Activated CD8-positive, alpha-beta T cell treated with anti-CD3 and anti-CD28 coated beads, Interleukin-2, amount 10 ng/mL, durations not matched to agents 7 days and 5 days (primary cell): ENCODE measurements at regions of chr1 and their contacts with region 1.

Region 1: GRCh38 chr1:48061162-48062136 is 64.3 kb upstream of the TRABD2B start:
- DNase-seq: peak; percentile 46
- ATAC-seq: no peak
- H3K4me3 Mint-ChIP-seq: no peak overlapping the region
- H3K27ac Mint-ChIP-seq: no peak overlapping the region
- H3K4me1 Mint-ChIP-seq: no peaks in the 10 kb centered on the region
- H3K27me3 Mint-ChIP-seq: no peaks in the 10 kb centered on the region

Region 2: DNA sequence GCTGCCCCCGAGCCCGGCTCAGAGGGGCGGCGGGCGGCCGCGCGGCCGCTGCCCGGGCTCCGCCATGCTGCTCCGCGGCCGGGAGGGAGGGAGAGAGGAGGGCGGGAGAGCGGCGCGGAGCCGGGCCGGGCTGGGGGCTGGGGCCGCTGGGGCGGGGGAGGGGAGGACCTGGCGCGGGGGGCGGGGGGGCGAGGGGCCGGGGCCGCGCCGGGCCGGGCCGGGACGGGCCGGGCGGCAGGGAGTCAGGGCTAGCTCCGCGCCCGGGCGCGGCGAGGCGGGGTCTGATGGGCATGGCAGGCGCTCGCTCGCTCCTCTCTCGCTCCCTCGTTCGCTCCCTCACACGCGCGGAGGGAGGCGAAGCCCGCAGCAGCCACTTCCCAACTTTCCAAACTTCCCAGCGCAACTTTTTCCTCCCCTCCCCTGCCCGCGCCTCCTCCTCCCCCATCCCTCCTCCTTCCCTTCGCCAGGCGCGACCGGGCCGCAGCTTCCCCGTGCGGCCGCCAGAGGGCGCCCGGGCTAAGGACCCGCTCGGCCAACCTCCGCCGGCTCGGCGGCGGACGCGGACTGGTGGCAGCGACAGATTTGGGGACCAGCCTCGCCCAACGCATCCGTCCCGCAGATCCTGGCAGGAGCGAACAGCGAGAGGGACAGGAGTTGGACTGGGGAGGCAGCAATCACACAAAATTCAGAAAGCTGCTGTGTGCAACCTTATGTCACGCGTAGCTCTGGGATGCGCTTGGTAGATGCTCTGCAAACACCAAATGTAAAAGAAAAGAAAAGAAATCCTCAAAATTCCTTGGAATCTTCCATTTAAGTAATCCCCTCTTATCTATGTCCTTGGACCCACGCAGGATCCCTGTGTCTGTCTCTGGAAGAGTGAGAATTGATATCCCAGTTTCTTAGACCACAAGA is 63.9 kb before region 1 on chr1 and contains the start of gene TRABD2B:
- CTCF ChIA-PET with region 1: interaction called, 22 read pairs
- POLR2A ChIA-PET with region 1: no interaction called
- DNase-seq: peak; percentile 64
- ATAC-seq: peak; percentile 91
- H3K4me3 Mint-ChIP-seq: peak within 1 kb of the TSS; percentile 48
- H3K27ac Mint-ChIP-seq: no peak within 1 kb of the TSS
- H3K4me1 Mint-ChIP-seq: peaks cover 5% of the 10 kb centered on the region
- H3K27me3 Mint-ChIP-seq: peaks cover 35% of the 10 kb centered on the region
- total RNA-seq, gene TRABD2B: not detected

Region 3: DNA sequence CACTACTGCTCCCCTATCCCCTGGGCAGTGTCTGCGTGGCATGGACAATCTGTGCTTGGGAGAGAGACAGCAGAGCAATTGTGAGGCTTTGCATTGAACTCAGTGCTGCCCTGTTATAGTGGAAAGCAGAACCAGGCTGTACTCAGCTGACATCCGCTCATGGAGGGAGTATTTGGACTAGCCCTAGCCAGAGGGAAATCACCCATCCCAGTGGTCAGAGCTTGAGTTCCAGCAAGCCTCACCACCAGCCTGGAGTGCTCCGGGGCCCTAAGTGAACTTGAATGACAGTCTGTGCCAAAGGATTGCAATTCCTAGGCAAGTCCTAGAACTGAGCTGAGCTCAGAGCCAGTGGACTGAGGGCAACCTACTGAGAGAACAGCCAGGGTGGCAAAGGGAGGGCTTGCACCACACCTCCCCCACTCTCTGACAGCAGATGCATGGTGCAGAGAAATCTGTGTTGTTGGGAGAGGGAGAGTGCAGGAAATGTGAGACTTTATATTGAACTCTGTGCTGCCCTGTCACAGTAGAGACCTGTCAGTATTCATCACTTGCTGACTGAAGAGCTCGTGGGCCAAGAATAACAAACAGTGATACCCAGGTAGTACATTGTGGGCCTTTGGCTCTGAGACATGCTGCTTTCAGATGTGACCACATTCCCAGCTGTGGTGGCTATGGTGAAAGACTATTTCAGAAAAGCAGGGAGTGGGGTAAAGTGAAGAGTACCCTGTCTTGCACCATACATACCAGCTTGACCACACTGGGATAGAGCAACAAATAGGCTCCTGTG is 53.3 kb after region 1 on chr1:
- CTCF ChIA-PET with region 1: no interaction called
- POLR2A ChIA-PET with region 1: no interaction called
- DNase-seq: no peak
- ATAC-seq: no peak
- H3K4me3 Mint-ChIP-seq: no peak overlapping the region
- H3K27ac Mint-ChIP-seq: no peak overlapping the region
- H3K4me1 Mint-ChIP-seq: no peaks in the 10 kb centered on the region
- H3K27me3 Mint-ChIP-seq: peaks cover 6% of the 10 kb centered on the region

Region 4: DNA sequence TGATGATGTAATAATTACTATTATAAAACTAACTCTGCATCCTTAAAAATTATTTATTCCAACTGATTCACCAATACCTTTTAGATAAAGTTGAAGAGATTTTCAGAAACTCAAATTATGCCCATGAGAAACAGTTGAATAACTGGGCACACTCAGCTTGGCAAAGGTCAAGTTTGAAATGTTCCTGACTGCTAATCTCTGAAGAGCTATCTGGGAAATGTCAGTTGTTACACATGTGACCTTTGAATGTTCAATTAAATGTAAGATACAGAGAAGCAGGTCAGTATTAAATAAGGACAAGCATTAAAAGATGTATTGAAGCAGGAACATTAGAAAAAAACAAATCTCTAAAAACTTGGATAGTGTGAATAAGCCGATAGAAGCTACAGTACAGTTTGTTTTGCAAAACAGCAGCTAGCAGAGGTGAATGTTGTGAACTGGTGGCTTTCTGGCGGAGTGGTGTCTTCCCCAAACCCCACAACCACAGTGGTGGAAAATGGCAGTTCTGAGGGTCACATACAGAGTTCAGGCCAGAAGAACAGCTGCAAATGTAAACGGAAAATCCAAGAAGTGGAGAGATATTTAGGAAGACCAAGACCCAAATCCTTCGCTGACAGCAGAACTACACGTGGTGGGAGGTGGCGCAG is 99.2 kb after region 1 on chr1:
- CTCF ChIA-PET with region 1: no interaction called
- POLR2A ChIA-PET with region 1: no interaction called
- DNase-seq: no peak
- ATAC-seq: no peak
- H3K4me3 Mint-ChIP-seq: no peak overlapping the region
- H3K27ac Mint-ChIP-seq: no peak overlapping the region
- H3K4me1 Mint-ChIP-seq: no peaks in the 10 kb centered on the region
- H3K27me3 Mint-ChIP-seq: peaks cover 7% of the 10 kb centered on the region

Region 5: GRCh38 chr1:48182441-48182840 is 121.0 kb after region 1 on chr1:
- CTCF ChIA-PET with region 1: no interaction called
- POLR2A ChIA-PET with region 1: no interaction called
- DNase-seq: no peak
- ATAC-seq: no peak
- H3K4me3 Mint-ChIP-seq: no peak overlapping the region
- H3K27ac Mint-ChIP-seq: no peak overlapping the region
- H3K4me1 Mint-ChIP-seq: no peaks in the 10 kb centered on the region
- H3K27me3 Mint-ChIP-seq: peaks cover 10% of the 10 kb centered on the region